ENCODE measurements at regions of chr2 and their contacts with region 1.

Region 1: DNA sequence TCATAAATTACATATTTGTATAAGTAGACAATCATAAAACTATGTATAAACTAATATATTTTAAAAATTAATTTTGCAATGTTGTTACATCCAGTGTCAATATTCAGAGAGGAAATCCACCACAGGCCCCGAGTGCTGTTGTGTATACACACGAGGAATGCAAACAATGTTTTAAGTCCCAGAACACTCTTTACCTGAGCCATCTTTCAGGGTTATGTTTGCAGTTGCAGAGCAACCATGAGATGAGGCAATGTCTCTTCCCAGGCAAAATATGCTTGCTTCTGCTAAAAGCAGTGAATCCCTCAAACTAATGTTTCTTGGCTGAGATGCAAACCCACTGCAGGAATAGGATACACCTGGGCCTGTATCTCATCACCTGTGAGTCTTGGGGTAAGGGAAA is 91.3 kb downstream of the ASXL2 start:
- DNase-seq: no peak
- H3K4me3 Mint-ChIP-seq: no peak overlapping the region
- H3K27ac Mint-ChIP-seq: no peak overlapping the region
- H3K4me1 Mint-ChIP-seq: peaks cover 37% of the 10 kb centered on the region
- H3K27me3 Mint-ChIP-seq: no peaks in the 10 kb centered on the region

Region 2: DNA sequence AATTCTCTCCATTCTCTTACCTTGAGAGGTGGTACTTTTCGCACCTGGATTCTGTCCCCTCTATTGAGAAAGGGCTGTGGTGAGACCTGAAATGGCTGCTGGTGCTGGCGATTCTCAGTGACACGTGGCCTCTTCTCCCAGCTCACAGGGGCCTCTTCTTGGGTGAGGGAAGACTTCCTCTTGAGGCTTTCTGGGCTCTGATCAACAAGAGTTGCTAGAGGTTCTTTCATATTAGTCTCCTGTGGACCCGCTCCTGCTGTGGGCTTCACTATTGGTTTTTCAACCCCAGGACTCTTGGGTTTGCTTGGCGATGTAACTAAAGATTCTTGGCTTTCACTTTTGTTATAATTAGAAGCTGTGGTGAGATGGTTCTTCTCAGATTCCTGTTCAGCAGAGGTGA is 37.3 kb before region 1 on chr2:
- CTCF ChIA-PET with region 1: no interaction called
- POLR2A ChIA-PET with region 1: no interaction called
- intact Hi-C with region 1: loop called (anchors 5 kb)
- DNase-seq: no peak
- H3K4me3 Mint-ChIP-seq: no peak overlapping the region
- H3K27ac Mint-ChIP-seq: peak overlapping the region; percentile 36
- H3K4me1 Mint-ChIP-seq: peaks cover 23% of the 10 kb centered on the region
- H3K27me3 Mint-ChIP-seq: no peaks in the 10 kb centered on the region

Region 3: DNA sequence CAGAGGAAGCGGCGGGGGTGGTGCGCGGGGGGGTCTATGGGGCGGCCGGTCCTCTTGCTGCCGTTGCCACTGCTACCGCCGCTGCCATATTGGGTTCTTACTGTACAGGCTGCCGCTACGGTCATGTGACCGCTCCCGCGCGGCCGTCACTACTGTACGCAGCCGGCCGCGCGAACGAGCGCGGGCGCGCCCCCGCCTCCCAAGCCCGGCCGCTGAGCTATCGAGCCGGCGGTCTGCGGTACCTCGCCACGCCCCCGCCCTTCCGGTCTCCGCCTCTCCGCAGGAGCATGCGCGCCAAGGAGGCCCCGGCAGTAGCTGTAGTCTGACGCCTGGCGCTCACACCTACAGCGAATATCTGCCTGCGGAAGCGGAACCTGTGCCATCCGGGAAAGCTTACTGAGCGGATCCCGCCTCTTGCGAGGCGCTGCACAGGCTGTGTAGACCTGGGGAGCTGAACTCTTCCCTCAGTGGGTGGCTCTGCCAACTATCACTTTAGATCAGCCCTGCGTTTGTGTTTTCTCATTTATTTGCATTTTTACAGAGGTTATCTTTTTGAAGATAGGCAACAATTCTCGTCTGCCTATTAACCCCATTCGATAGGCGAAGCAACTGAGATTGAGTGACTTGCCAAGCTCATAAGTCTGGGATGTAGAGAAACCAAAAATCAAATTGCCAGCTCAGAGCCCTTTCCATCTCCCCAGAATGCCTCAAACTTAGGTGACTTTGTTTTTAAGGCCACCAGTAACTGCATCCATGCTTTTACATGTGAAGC is 91.5 kb after region 1 on chr2 and contains the start of gene ASXL2:
- CTCF ChIA-PET with region 1: no interaction called
- POLR2A ChIA-PET with region 1: no interaction called
- intact Hi-C with region 1: no loop called
- DNase-seq: peak; percentile 99
- H3K4me3 Mint-ChIP-seq: peak within 1 kb of the TSS; percentile 93
- H3K27ac Mint-ChIP-seq: peak within 1 kb of the TSS; percentile 94
- H3K4me1 Mint-ChIP-seq: peaks cover 39% of the 10 kb centered on the region
- H3K27me3 Mint-ChIP-seq: no peaks in the 10 kb centered on the region
- total RNA-seq, gene ASXL2: 37.8 to 38.7 TPM

Measured in activated CD4-positive, alpha-beta memory T cell treated with anti-CD3 and anti-CD28 coated beads for 36 hours (primary cell).